Prostate gland (tissue), 2 donors: ENCODE measurements at regions of chr11 and their contacts with region 1.

Region 1: DNA sequence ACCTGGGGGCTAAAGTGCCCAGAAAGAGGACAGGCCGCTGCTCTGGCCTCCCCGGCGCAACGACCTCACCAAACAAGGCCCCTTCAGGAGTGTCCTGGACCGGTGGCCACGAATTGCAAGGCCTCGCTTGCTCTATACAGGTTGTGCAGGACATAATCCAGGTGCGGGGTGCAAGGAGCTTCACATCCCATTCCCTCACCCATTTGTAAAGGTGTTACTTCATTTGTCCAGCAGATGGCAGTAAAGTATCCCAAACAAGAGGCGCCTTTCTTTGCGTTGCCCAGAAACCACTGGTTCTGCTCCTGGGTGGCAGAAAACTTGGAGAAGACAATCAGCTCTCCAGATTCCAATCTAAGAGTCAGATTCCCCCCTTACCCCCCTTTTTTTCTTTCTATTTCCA is 35.9 kb upstream of the PRDM11 start:
- DNase-seq: peak; percentile 65
- H3K4me3 ChIP-seq: no peak overlapping the region
- H3K27ac ChIP-seq: no peak overlapping the region
- H3K4me1 ChIP-seq: no peaks in the 10 kb centered on the region
- H3K27me3 ChIP-seq: no peaks in the 10 kb centered on the region
- CTCF ChIP-seq: peak; percentile 61 to 93 (median 84)
- POLR2A ChIP-seq: no peak

Region 2: DNA sequence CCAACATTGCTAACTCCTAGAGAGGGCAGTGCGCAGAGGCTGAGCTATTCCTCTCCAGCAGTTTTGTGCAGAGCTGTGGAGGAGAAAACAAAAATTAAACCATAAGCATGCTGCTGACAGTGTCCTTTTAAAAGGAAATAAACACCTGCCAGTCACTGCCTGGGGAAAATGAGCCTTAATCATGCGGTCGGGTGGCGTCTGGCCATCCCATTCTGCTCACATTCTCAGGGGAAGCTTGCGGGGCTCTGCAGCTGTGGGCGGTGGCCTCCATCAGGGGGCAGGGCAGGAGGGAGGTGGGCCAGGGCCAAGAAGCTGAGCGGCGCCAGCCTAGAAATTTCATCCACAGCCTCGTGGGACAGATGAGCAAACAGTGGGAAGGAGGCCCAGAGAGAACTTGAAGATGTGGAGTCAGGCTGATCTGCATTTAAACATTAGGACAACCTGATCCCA is 88.8 kb before region 1 on chr11:
- intact Hi-C with region 1: no loop called
- DNase-seq: no peak
- H3K4me3 ChIP-seq: no peak overlapping the region
- H3K27ac ChIP-seq: no peak overlapping the region
- H3K4me1 ChIP-seq: no peaks in the 10 kb centered on the region
- H3K27me3 ChIP-seq: no peaks in the 10 kb centered on the region
- CTCF ChIP-seq: no peak
- POLR2A ChIP-seq: no peak

Region 3: DNA sequence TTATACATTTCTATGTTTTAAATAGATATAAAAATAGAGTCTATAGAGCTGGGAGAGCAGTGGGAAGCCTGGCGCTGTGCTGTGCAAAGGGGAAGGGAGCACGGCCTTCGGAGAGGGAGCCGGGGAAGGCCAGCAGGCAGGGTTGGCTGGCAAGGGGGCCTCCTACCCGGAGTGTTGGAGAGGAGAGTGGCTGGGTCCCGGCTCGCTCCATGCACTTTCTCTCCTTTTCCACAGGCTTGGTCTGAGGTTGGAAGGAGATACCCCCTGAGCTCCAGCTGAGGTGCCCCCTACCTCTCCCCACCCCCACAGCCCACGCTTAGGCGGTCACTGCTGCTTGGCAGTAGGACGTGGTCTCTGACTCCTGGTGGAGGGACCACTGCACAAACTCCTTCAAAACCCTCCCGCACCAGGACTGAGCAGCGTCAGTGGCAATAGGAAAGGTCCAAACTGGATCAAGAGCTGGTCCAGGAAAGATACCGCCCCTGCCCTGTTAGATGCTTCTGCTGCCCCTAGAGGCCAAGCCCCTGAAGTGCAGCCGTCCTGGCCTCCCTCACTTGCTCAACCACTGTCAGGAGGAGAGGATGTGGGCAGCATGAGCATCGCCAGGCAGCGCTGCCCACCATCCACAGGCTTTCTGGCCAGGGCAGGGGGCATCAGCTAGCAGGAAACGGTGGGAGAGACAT is 122.7 kb after region 1 on chr11:
- intact Hi-C with region 1: loop called (anchors 10 kb)
- DNase-seq: peak; percentile 40
- H3K4me3 ChIP-seq: no peak overlapping the region
- H3K27ac ChIP-seq: no peak overlapping the region
- H3K4me1 ChIP-seq: no peaks in the 10 kb centered on the region
- H3K27me3 ChIP-seq: no peaks in the 10 kb centered on the region
- CTCF ChIP-seq: peak; percentile 52 to 66 (median 59)
- POLR2A ChIP-seq: no peak

Region 4: DNA sequence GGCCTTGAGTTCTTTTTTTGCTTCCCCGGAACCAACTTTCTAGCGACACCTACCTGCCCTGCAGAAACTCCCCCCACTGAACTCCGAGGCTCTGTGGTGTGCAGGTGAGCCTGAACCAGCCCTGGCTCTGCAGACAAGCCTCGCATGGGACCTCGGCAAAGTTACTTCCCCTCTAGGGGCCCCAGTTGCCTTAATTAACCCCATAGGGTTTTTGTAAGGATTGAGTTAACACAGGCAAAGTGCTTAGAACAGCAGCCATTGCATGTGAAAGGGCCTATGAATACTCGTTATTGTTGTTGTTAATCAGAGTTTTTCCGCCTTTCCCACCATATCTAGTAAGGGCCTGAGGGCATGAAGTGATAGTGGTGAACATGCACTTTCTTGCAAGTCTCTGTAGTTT is 188.2 kb after region 1 on chr11:
- intact Hi-C with region 1: loop called (anchors 2 kb)
- DNase-seq: no peak
- H3K4me3 ChIP-seq: no peak overlapping the region
- H3K27ac ChIP-seq: no peak overlapping the region
- H3K4me1 ChIP-seq: no peaks in the 10 kb centered on the region
- H3K27me3 ChIP-seq: no peaks in the 10 kb centered on the region
- CTCF ChIP-seq: no peak
- POLR2A ChIP-seq: no peak

Region 5: GRCh38 chr11:45332276-45332934 is 221.8 kb after region 1 on chr11:
- intact Hi-C with region 1: loop called (anchors 1 kb)
- DNase-seq: no peak
- H3K4me3 ChIP-seq: no peak overlapping the region
- H3K27ac ChIP-seq: no peak overlapping the region
- H3K4me1 ChIP-seq: no peaks in the 10 kb centered on the region
- H3K27me3 ChIP-seq: no peaks in the 10 kb centered on the region
- CTCF ChIP-seq: peak; percentile 47 to 84 (median 65)
- POLR2A ChIP-seq: no peak

Region 6: DNA sequence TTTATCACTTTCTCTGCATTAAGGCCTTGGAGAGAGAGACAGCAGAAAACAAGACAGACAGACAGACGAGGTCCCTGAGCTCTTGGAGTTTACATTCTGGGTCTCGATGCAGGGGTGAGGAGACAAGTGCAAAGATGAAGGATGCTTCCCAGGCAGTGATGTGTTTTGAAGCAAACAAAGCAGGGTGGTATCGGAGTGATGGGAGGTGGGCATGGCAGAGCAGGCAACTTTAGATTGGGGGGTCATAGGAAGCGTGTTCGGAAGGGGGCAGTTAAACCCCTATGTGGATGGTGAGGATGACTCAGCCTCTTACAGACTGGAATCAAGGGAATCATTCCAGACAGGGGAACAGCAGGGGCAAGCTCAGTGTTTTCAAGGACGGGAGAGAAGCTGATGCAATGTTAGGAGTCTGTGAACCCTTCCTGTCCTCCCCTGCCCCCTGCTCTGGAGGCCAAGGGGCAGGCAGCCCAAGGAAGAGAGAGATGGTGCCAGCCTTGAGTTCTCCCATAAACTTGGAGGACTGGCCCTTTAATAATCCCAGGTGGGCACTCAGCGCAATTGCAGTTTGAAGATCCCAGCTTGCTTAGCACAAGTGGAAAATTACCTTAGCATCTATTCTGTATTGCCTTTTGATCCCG is 374.6 kb after region 1 on chr11:
- intact Hi-C with region 1: no loop called
- DNase-seq: no peak
- H3K4me3 ChIP-seq: no peak overlapping the region
- H3K27ac ChIP-seq: no peak overlapping the region
- H3K4me1 ChIP-seq: no peaks in the 10 kb centered on the region
- H3K27me3 ChIP-seq: peaks cover 3% of the 10 kb centered on the region
- CTCF ChIP-seq: no peak
- POLR2A ChIP-seq: no peak